Activated T-helper 1 cell treated with anti-CD3 and anti-CD28 coated beads, Interleukin-12 subunit alpha, Interleukin-12 subunit beta, Interleukin-2, Interleukin-4 antibody, amounts not matched to agents 30 ng/mL and 10 ng/mL and 1 ng/mL, durations not matched to agents 14 hours and 24 hours and 36 hours (primary cell): ENCODE measurements at regions of chr6 and their contacts with region 1.

Region 1: GRCh38 chr6:128029826-128030225 is 129.0 kb upstream of the THEMIS start:
- DNase-seq: no peak
- H3K4me3 Mint-ChIP-seq: no peak overlapping the region
- H3K27ac Mint-ChIP-seq: no peak overlapping the region
- H3K4me1 Mint-ChIP-seq: peaks cover 10% of the 10 kb centered on the region
- H3K27me3 Mint-ChIP-seq: no peaks in the 10 kb centered on the region

Region 2: DNA sequence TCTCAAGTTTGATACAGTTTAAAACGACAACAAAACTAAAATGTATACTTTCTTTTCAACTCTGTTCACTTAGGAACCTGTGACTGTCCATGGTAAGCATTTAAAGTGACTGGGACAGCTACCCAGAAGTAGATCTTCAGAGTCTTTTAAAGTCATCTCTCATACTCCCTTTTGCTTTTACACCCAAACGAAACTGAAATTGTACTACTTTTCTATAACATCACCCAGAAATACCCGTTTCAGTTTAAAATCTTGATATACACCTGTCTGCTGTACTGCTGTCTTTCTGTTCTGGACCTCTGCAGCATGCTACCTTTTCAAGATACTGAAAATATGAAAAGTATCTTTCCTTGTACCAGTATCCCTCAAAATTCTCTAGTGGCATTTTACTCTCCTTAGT is 41.4 kb after region 1 on chr6:
- intact Hi-C with region 1: loop called (anchors 1 kb)
- DNase-seq: no peak
- H3K4me3 Mint-ChIP-seq: no peak overlapping the region
- H3K27ac Mint-ChIP-seq: no peak overlapping the region
- H3K4me1 Mint-ChIP-seq: no peaks in the 10 kb centered on the region
- H3K27me3 Mint-ChIP-seq: peaks cover 2% of the 10 kb centered on the region